SK-N-SH (cell line): ENCODE measurements at regions of chr17 and their contacts with region 1.

Region 1: DNA sequence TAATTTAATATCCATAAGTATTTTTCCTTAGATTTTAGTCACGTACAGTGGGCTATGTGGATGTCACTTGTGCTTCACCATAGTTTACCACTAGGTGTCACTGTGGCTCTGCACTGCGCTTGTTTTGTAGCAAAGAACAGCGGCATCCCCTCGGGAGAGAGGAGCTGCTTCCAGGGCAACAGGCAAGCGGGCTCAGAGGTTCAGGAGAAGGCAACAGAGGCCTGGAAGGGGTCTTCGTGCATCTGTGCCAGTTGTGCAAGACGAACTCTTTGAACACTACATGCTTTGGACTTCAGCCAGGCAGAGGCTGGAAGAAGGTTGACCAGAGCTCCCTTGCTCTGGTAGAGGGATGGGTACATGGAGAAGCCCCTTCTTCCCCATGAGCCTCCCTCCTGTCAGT is 20.6 kb downstream of the CYB561 start:
- DNase-seq: peak; percentile 90
- H3K4me3 ChIP-seq: no peak overlapping the region; a peak in 1 of 4 replicates
- H3K27ac ChIP-seq: peak overlapping the region in 1 of 2 experiments; percentile 77; a peak in 2 of 4 replicates
- H3K4me1 ChIP-seq: peaks cover 0 to 48% of the 10 kb centered on the region in 2 experiments; a peak in 2 of 4 replicates
- H3K27me3 ChIP-seq: no peaks in the 10 kb centered on the region
- CTCF ChIP-seq: peak; percentile 100
- EP300 ChIP-seq: peak in 1 of 2 experiments; percentile 50; a peak in 1 of 4 replicates
- RAD21 ChIP-seq: peak; percentile 100

Region 2: DNA sequence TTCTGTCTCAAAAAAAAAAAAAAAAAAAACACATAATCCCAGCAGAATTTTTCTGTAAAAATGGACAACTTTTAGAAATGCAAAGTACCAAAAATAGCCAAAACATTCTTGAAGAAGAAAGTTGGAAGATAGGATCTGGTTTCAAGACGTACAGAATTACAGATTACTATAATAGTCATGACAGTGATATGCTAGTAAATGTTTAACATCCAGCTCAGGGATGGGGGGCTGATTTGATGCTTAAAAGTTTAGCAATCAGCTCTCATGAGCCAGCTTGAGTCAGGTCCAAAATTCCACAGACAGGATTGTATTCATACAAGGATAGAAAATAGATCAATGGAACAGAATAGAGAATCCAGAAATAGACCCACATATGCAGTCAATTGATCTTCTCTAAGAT is 79.9 kb before region 1 on chr17:
- CTCF ChIA-PET with region 1: no interaction called
- POLR2A ChIA-PET with region 1: no interaction called
- DNase-seq: no peak
- H3K4me3 ChIP-seq: no peak overlapping the region
- H3K27ac ChIP-seq: peak overlapping the region in 1 of 2 experiments; percentile 18; a peak in 2 of 4 replicates
- H3K4me1 ChIP-seq: peaks cover 0 to 14% of the 10 kb centered on the region in 2 experiments; a peak in 3 of 4 replicates
- H3K27me3 ChIP-seq: no peaks in the 10 kb centered on the region
- CTCF ChIP-seq: no peak
- EP300 ChIP-seq: peak in 1 of 2 experiments; percentile 51; a peak in 1 of 4 replicates
- RAD21 ChIP-seq: no peak

Region 3: GRCh38 chr17:63445979-63446691 is 20.7 kb after region 1 on chr17 and contains the start of gene CYB561:
- CTCF ChIA-PET with region 1: interaction called, 575 read pairs
- POLR2A ChIA-PET with region 1: interaction called, 572 read pairs
- DNase-seq: peak; percentile 97
- H3K4me3 ChIP-seq: peak within 1 kb of the TSS; percentile 56 to 64
- H3K27ac ChIP-seq: peak within 1 kb of the TSS; percentile 19 to 99; a peak in 2 of 4 replicates
- H3K4me1 ChIP-seq: peaks cover 8 to 69% of the 10 kb centered on the region in 2 experiments
- H3K27me3 ChIP-seq: no peaks in the 10 kb centered on the region
- CTCF ChIP-seq: peak; percentile 54
- EP300 ChIP-seq: no peak
- RAD21 ChIP-seq: peak; percentile 32
- polyA plus RNA-seq, gene CYB561: 28.3 and 38.6 TPM in 2 replicates

Region 4: DNA sequence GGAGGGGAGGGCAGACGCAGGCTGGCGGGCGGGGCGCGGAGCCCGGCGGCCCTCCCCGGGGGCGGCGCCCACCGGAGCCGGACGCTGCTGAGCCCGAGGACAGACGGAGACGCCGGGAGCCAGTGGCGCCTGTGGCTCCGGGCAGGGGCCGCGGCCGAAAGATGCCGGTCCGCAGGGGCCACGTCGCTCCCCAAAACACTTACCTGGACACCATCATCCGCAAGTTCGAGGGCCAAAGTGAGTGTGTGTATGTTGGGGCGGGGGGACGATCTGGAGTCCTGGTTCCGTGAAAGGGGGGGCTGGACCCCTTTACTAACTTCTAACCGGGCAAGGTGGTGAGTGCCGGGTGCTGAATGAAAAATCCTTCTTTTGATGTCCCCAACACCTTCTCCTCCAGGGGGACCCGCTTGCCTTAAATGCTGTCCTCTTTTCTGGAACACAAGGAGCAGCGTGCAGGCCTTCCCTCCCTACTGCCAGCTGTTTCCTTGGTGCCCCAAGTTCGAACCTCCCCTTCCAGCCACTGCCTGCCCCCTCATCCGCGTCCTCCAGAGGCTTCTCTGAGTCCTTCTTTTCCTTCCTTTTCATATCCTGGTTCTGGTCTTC is 97.9 kb after region 1 on chr17 and contains the start of gene KCNH6:
- CTCF ChIA-PET with region 1: interaction called, 27 read pairs
- POLR2A ChIA-PET with region 1: no interaction called
- DNase-seq: peak; percentile 75
- H3K4me3 ChIP-seq: peak within 1 kb of the TSS; percentile 43 to 53
- H3K27ac ChIP-seq: no peak within 1 kb of the TSS; a peak in 1 of 4 replicates
- H3K4me1 ChIP-seq: peaks cover 0 to 55% of the 10 kb centered on the region in 2 experiments; a peak in 1 of 4 replicates
- H3K27me3 ChIP-seq: 0 out of 2 replicates have a peak, but pooled peaks cover 17% of the 10 kb centered on the region
- CTCF ChIP-seq: 0 out of 2 replicates have a peak, but pooled peaks have one; percentile 9
- EP300 ChIP-seq: no peak
- RAD21 ChIP-seq: peak; percentile 11; the same call in 1 of the 2 replicates
- polyA plus RNA-seq, gene KCNH6: 0.15 and 0.18 TPM in 2 replicates

Region 5: DNA sequence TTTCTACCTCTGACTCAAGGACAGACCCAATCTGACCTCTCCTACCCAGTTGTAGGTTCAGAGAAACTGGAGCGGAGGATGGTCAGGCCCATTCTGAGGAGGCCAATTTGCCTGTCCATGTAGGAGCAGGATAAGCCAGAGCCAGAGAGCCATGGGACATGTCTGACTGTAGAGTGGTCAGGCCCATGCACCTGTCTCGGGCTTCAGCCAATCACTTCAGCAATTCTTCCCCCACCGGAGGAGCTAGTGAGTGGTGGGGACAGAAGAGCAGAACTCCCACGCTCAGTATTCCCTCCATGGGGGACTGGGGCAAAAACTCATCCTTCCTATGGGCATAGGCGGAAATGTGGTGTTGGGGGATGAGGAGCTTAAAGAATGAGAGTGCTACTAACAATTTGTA is 139.1 kb after region 1 on chr17:
- CTCF ChIA-PET with region 1: interaction called, 23 read pairs
- POLR2A ChIA-PET with region 1: no interaction called
- DNase-seq: no peak
- H3K4me3 ChIP-seq: no peak overlapping the region
- H3K27ac ChIP-seq: no peak overlapping the region
- H3K4me1 ChIP-seq: peaks cover 0 to 3% of the 10 kb centered on the region in 2 experiments; a peak in 1 of 4 replicates
- H3K27me3 ChIP-seq: no peaks in the 10 kb centered on the region
- CTCF ChIP-seq: no peak
- EP300 ChIP-seq: no peak
- RAD21 ChIP-seq: no peak

Region 6: GRCh38 chr17:63611354-63611753 is 185.9 kb after region 1 on chr17:
- CTCF ChIA-PET with region 1: interaction called, 827 read pairs
- POLR2A ChIA-PET with region 1: interaction called, 20 read pairs
- DNase-seq: no peak
- H3K4me3 ChIP-seq: no peak overlapping the region
- H3K27ac ChIP-seq: peak overlapping the region; percentile 6 to 11; a peak in 2 of 4 replicates
- H3K4me1 ChIP-seq: no peaks in the 10 kb centered on the region
- H3K27me3 ChIP-seq: no peaks in the 10 kb centered on the region
- CTCF ChIP-seq: no peak
- EP300 ChIP-seq: no peak
- RAD21 ChIP-seq: no peak

Region 7: GRCh38 chr17:63681572-63681971 is 256.1 kb after region 1 on chr17:
- CTCF ChIA-PET with region 1: interaction called, 18 read pairs
- POLR2A ChIA-PET with region 1: no interaction called
- DNase-seq: no peak
- H3K4me3 ChIP-seq: no peak overlapping the region
- H3K27ac ChIP-seq: peak overlapping the region in 1 of 2 experiments; percentile 1; a peak in 1 of 4 replicates
- H3K4me1 ChIP-seq: peaks cover 3 to 22% of the 10 kb centered on the region in 2 experiments
- H3K27me3 ChIP-seq: no peaks in the 10 kb centered on the region
- CTCF ChIP-seq: no peak
- EP300 ChIP-seq: no peak
- RAD21 ChIP-seq: no peak